Activated CD4-positive, alpha-beta memory T cell treated with anti-CD3 and anti-CD28 coated beads for 36 hours (primary cell): ENCODE measurements at regions of chr1 and their contacts with region 1.

Region 1: GRCh38 chr1:201149400-201149799 is 4.9 kb downstream of the TMEM9 start:
- DNase-seq: no peak
- H3K4me3 Mint-ChIP-seq: no peak overlapping the region
- H3K27ac Mint-ChIP-seq: no peak overlapping the region
- H3K4me1 Mint-ChIP-seq: peaks cover 15% of the 10 kb centered on the region
- H3K27me3 Mint-ChIP-seq: no peaks in the 10 kb centered on the region

Region 2: GRCh38 chr1:201096035-201096434 is 53.4 kb before region 1 on chr1:
- CTCF ChIA-PET with region 1: no interaction called
- POLR2A ChIA-PET with region 1: no interaction called
- intact Hi-C with region 1: no loop called
- DNase-seq: no peak
- H3K4me3 Mint-ChIP-seq: no peak overlapping the region
- H3K27ac Mint-ChIP-seq: no peak overlapping the region
- H3K4me1 Mint-ChIP-seq: no peaks in the 10 kb centered on the region
- H3K27me3 Mint-ChIP-seq: peaks cover 4% of the 10 kb centered on the region

Region 3: DNA sequence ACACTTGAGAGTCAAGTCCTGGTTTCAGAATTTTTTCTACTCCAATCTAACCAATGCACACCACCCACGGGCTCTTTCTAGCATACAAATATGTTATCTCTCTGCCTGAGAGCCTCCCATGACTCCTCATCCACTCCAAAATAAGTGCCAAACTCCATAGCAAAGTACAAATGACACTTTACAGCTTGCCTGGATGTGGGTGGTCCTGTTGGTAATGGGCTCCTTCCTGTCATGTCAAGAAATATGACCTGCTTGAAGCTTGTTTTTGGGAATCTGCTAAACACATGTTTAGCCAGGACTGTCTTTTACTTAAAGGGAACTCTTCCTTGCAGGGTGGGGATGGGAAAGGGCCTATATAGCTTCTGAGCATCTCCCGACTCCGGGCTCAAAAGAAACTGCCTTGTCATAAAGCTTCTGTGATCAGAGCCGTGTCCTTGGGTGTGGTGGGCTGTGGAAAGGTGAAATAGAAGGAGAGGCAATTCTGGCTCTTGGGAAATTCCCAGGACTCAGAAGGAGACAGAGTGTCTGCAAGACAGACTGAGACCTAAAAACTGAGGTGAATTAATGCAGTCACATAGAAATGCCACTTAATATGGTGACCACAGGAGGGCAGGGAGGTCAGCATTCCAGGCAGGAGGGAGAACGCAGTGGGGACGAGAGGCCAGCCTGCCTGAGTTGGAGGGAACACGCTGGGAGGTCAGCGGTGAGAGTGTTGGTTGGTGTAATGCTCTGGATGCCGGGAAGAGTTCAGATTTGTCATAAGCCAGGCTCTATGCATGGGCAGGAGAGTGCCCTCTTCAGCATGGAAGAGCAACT is 35.1 kb after region 1 on chr1:
- CTCF ChIA-PET with region 1: interaction called, 4 read pairs
- POLR2A ChIA-PET with region 1: no interaction called
- intact Hi-C with region 1: loop called (anchors 1 kb)
- DNase-seq: no peak
- H3K4me3 Mint-ChIP-seq: no peak overlapping the region
- H3K27ac Mint-ChIP-seq: no peak overlapping the region
- H3K4me1 Mint-ChIP-seq: no peaks in the 10 kb centered on the region
- H3K27me3 Mint-ChIP-seq: peaks cover 31% of the 10 kb centered on the region